Upper lobe of right lung (tissue), 1 donor: ENCODE measurements at regions of chr18 and their contacts with region 1.

Region 1: DNA sequence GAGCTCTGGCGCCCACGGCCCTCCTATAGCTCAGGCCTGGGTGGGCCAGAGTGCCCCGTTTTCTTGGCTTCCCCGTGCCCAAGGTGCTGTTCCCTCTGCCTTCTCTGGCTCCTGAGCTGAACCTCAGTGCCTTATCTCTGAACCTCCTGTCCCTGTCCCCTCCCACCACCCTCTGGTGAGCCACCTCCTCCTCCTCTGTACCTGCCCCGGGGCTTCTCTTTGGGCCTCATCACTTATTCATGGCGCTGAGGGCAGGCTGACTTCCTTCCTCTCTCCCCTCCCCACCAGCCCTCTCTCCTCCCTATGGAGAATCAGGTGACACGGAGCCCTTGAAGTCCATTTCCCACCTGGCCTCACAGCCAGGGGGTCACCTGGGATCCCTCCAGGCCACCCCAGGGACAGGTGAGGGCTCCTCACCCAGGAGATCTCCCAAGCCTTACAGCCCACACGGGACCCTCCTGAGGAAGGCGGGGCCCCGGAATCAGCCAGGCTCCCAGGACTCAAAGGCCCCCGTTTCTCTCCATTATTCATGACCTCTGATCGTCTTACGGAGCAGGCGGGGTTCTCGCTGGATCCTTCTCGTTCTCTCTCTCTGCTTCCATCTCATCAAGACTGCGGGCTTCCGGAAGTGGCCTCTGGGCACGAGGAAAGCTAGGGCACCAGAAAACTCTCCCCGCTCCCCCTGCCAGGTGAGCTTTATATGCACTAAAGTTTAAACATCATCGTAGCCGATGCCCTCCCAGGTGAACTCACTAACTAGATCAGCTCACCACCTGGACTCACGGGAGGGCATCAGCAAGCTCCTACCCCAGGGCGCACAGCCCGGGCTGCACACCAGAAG is at the start of gene LOXHD1:
- DNase-seq: no peak
- ATAC-seq: no peak
- H3K4me3 ChIP-seq: no peak within 1 kb of the TSS
- H3K27ac ChIP-seq: no peak within 1 kb of the TSS
- H3K4me1 ChIP-seq: no peaks in the 10 kb centered on the region
- H3K27me3 ChIP-seq: no peaks in the 10 kb centered on the region
- CTCF ChIP-seq: no peak
- total RNA-seq, gene LOXHD1: 2.7 TPM

Region 2: DNA sequence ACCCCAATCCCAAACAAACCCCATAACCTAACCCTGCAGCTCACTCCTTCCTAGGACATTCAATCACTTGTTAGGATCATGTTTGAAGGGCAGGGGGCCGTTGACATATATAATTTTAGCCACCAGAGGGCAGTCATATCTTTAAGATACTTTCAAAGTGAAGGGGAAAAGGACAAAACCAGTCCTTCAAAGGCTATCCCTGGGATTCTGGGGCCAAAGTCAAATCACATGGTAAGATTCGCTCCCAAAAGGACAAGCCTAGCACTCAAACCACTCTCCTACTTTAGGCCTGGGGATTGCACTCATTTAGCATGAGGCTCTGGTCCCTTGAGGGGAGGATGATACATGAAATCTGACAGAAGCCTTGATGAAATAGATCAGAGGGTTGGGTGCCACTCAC is 508.5 kb before region 1 on chr18:
- intact Hi-C with region 1: loop called (anchors 10 kb)
- DNase-seq: no peak
- ATAC-seq: peak; percentile 83
- H3K4me3 ChIP-seq: no peak overlapping the region
- H3K27ac ChIP-seq: no peak overlapping the region
- H3K4me1 ChIP-seq: no peaks in the 10 kb centered on the region
- H3K27me3 ChIP-seq: no peaks in the 10 kb centered on the region
- CTCF ChIP-seq: peak; percentile 76

Region 3: DNA sequence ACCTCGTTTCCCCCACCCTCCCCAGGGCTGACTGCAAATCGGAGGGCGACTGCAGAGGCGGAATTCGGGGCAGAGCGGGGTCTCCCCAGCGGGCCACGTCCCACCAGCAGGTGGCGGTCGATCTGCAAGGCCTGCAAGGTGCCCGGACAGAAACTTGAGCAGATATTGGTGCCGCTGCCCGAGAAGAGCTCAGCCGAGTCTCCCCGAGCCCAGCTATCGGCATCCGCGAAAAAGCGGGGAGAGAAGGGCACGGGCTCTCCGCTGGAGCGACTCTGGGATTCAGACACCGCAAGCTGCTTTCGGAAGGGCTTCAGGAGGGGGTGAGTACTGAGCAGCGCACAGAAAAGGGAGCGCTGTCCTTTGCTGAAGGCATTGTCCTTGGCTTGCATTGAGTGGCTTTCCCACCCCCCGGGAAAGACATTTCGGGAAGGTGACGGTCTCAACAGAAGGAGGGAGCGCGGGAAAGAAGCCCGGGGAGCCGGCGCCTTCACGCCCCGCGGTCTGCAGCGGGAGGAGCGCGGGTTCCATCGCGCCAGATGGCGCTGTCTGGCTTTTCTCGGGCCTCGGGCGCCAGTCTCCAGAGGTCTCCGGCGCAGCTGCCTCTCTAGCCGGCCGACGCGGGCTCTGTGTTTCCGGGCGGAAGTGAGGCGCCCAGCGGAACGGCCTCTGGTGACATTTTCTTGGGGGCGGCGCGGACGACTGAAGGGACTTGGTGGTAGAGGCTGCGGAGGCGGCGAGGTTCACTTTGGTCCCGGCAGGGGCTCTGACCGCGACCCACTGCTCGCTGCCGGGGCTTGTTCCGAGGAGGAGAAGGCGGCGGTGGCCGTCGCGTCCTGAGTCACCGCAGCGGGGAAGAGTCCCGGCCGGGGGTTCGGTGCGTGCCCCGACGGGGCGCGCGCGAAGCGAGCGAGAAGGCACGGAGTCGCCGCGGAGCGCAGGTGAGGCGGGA is 483.7 kb before region 1 on chr18:
- intact Hi-C with region 1: loop called (anchors 10 kb)
- DNase-seq: peak; percentile 98
- ATAC-seq: peak; percentile 98
- H3K4me3 ChIP-seq: peak overlapping the region; percentile 90
- H3K27ac ChIP-seq: peak overlapping the region; percentile 91
- H3K4me1 ChIP-seq: peaks cover 12% of the 10 kb centered on the region
- H3K27me3 ChIP-seq: no peaks in the 10 kb centered on the region
- CTCF ChIP-seq: peak; percentile 75